Activated B cell treated with CpG ODN at 0.5 μM for 24 hours (primary cell): ENCODE measurements at regions of chr2 and their contacts with region 1.

Region 1: GRCh38 chr2:227163998-227164762 is at the starts of genes COL4A3 and COL4A4:
- DNase-seq: peak; percentile 54
- ATAC-seq: peak; percentile 78
- H3K4me3 Mint-ChIP-seq: peak within 1 kb of the TSS; percentile 87
- H3K27ac Mint-ChIP-seq: peak within 1 kb of the TSS; percentile 89
- H3K4me1 Mint-ChIP-seq: peaks cover 44% of the 10 kb centered on the region
- H3K27me3 Mint-ChIP-seq: peaks cover 5% of the 10 kb centered on the region
- CTCF ChIP-seq: no peak
- total RNA-seq, gene COL4A3: 15.5 and 18.3 TPM in 2 replicates
- total RNA-seq, gene COL4A4: 9.3 and 10.9 TPM in 2 replicates

Region 2: DNA sequence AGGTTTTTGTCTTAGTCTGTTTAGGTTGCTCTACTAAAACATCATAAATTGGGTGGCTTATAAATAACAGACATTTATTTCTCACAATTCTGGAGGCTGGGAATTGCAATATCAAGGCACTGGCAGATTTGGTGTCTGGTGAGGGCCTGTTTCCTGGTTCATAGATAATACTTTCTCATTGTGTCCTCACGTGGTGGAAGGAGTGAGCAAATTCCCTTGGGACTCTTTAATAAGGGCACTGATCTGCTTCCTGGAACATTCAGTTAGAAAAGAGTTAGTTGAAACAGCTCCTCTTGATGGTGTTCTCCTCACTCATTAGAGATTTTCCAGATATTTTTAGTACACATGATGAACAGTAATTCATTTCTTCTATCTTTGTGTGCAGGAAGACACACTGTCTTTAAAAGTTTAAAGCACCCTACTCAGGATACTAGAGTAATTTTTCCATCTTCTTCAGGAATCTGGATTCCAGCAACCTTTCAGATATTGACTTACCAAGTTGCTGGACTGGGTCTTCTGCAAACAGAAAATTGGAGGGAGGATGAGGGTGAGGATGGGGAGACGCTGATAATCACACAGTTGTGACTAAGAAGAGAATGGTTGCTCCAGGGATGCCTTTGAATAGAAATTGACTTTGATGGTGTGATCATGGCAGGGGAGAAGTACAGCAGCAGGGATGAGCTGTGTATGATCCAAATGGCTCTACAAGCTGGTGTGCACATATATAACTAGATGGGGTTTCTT is 22.7 kb after region 1 on chr2:
- CTCF ChIA-PET with region 1: no interaction called
- POLR2A ChIA-PET with region 1: no interaction called
- intact Hi-C with region 1: loop called (anchors 2 kb)
- DNase-seq: no peak
- ATAC-seq: peak; percentile 67
- H3K4me3 Mint-ChIP-seq: no peak overlapping the region
- H3K27ac Mint-ChIP-seq: no peak overlapping the region
- H3K4me1 Mint-ChIP-seq: peaks cover 25% of the 10 kb centered on the region
- H3K27me3 Mint-ChIP-seq: no peaks in the 10 kb centered on the region
- CTCF ChIP-seq: no peak